A673 (cell line): ENCODE measurements at regions of chr10 and their contacts with region 1.

Region 1: GRCh38 chr10:112907893-112908292 is 42.2 kb upstream of the TCF7L2 start:
- DNase-seq: no peak
- H3K4me3 ChIP-seq: no peak overlapping the region
- H3K27ac ChIP-seq: no peak overlapping the region
- H3K4me1 ChIP-seq: no peaks in the 10 kb centered on the region
- H3K27me3 ChIP-seq: no peaks in the 10 kb centered on the region
- CTCF ChIP-seq: no peak

Region 2: DNA sequence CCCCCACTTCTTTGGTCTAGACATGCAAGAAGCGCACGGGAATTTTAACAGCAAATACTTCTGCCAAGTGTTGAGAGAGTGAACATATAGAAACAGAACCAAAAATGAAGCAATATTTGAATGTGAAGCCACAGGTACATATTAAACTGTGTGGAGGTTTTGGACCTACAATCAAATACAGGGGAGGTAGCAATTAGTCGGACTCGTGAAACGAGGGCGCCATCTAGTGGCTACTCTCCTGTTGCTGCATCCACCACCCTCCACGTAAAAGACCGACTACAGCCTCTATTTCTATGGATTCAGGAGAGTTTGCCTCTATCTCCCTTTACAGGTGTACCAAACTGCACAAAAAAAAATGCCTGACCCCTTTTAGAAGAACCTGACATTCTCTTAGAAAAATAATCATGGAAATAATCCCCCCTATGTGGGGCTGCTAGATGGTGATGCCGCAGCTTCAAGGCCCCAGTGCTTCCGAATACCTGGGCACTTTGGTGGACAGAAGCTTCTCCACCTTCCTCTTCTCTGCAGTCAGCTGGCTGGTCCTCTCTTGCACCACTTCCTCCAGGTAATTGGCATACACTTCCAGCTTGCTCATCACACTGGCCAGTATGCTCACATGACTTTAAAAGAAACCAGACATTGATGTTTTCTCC is 592.9 kb before region 1 on chr10:
- CTCF ChIA-PET with region 1: no interaction called
- POLR2A ChIA-PET with region 1: no interaction called
- intact Hi-C with region 1: no loop called
- DNase-seq: peak; percentile 71
- H3K4me3 ChIP-seq: no peak overlapping the region
- H3K27ac ChIP-seq: no peak overlapping the region
- H3K4me1 ChIP-seq: no peaks in the 10 kb centered on the region
- H3K27me3 ChIP-seq: peaks cover 68% of the 10 kb centered on the region
- CTCF ChIP-seq: peak; percentile 93

Region 3: GRCh38 chr10:112332509-112333228 is 575.2 kb before region 1 on chr10:
- CTCF ChIA-PET with region 1: no interaction called
- POLR2A ChIA-PET with region 1: no interaction called
- intact Hi-C with region 1: no loop called
- DNase-seq: peak; percentile 14
- H3K4me3 ChIP-seq: no peak overlapping the region
- H3K27ac ChIP-seq: no peak overlapping the region
- H3K4me1 ChIP-seq: no peaks in the 10 kb centered on the region
- H3K27me3 ChIP-seq: no peaks in the 10 kb centered on the region
- CTCF ChIP-seq: no peak

Region 4: GRCh38 chr10:112792487-112793201 is 115.2 kb before region 1 on chr10:
- CTCF ChIA-PET with region 1: no interaction called
- POLR2A ChIA-PET with region 1: no interaction called
- intact Hi-C with region 1: no loop called
- DNase-seq: peak; percentile 57
- H3K4me3 ChIP-seq: peak overlapping the region; percentile 0
- H3K27ac ChIP-seq: peak overlapping the region; percentile 47
- H3K4me1 ChIP-seq: peaks cover 16% of the 10 kb centered on the region
- H3K27me3 ChIP-seq: no peaks in the 10 kb centered on the region
- CTCF ChIP-seq: no peak

Region 5: DNA sequence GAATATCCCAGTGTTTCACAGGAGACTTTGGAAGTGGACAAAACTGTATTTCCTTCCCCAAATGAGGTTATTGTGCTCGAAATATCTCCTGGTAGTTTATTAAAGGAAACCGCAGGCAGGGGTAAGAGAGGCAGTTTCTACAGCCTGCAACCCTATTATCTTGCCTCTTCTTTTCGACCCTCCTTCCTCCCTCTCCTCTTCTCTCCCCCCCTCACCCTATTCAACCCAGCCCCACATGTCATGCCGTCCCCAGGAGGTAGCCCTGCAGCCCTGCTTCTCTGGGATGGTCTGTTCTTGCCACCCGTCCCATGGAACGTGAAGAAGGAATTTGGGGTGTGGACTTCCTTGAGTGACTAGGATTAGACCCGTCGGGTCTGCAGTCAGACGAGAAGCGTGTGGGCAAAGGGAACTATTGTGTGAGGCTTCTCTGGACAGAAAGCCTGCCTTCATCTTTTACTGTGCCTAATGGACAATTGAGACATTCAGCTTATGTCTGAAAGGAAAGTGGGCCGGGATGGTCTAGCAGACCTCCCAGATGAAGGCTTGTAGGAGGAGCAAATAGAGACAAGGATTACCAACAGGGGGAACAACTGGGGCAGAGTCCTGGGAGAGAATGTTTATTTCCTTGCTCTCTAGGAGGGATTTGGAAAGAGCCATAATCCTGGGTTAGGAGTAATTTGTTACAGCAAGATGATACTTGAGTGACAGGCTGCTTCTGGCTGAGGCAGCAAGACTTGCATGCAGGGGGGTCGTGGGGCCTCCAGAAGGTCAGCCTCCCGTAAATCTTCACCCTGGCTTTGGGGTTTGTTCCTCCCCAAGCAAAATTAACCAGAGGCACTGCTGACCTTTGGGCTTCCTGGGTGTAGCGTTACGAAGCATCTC is 119.9 kb after region 1 on chr10:
- CTCF ChIA-PET with region 1: no interaction called
- POLR2A ChIA-PET with region 1: interaction called, 21 read pairs
- intact Hi-C with region 1: no loop called
- DNase-seq: peak; percentile 21
- H3K4me3 ChIP-seq: no peak overlapping the region
- H3K27ac ChIP-seq: no peak overlapping the region
- H3K4me1 ChIP-seq: peaks cover 19% of the 10 kb centered on the region
- H3K27me3 ChIP-seq: no peaks in the 10 kb centered on the region
- CTCF ChIP-seq: no peak